Mammary epithelial cell (primary cell): ENCODE measurements at regions of chr3 and their contacts with region 1.

Region 1: DNA sequence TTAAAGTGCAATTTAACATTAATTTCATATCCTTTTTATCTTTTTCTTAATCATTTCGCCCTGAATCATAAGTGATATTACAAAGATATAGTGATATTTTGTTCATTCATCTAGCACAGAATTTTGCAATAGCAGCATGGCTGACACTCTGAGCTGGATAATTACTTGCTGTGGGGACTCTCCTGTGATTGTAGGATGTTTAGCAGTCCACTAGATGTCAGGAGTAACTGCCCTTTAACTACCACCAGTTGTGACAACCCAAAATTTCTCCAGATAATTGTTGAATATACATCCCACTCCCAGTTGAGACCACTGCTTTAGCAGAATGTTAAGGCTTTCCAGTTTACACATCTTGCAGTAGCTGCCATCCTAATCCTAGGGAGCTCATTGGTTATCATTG is 196.8 kb upstream of the MBNL1 start:
- DNase-seq: peak; percentile 45
- H3K4me3 ChIP-seq: no peak overlapping the region
- H3K27ac ChIP-seq: no peak overlapping the region
- H3K4me1 ChIP-seq: peaks cover 3% of the 10 kb centered on the region
- H3K27me3 ChIP-seq: no peaks in the 10 kb centered on the region
- CTCF ChIP-seq: peak; percentile 51 to 67

Region 2: GRCh38 chr3:152026033-152026556 is 45.8 kb before region 1 on chr3:
- CTCF ChIA-PET with region 1: no interaction called
- dilution Hi-C with region 1: no loop called
- in situ Hi-C with region 1: no loop called
- intact Hi-C with region 1: loop called (anchors 5 kb)
- DNase-seq: peak; percentile 66
- H3K4me3 ChIP-seq: peak overlapping the region in 1 of 3 experiments; percentile 33
- H3K27ac ChIP-seq: peak overlapping the region; percentile 67
- H3K4me1 ChIP-seq: peaks cover 36% of the 10 kb centered on the region
- H3K27me3 ChIP-seq: no peaks in the 10 kb centered on the region
- CTCF ChIP-seq: peak; percentile 13 to 20

Region 3: DNA sequence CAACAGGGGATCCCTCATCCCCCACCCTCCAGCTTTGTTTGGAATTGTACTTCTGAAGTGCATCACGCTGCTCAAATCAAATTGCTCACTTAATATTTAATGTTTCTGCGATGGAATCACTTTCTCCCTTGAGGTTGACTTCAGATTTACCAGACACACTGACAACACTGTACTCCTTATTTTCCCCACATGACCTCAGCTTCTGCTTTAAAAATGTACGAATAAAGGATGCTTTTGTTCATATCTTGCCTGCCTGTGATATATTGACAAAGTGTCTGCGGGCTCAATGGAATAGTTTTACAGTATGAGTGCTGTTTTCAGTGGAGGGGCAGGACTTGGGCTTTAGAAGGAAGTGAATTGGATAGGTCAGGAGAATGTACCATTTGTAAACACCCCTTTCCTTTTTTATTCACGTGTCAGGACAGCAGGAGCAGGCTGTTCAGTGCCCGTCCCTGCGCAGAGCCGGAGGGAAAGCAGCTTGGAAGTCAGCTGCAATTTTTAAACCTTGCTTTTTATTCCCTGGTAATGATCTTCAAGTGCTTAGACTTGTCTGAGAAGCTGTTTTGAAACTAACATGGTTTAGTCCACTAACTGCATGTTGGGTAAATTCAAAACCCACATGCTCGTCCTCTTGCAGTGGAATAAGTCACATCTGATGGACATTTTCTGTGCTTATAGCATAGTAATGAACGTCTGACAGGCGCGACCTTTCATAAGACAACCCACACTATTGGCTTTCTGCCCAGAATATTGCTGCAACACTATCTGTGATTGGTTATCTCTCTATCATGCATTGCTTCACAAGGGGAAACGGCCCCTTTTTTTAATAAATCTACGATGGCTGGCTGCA is 226.7 kb after region 1 on chr3:
- CTCF ChIA-PET with region 1: interaction called, 4 read pairs
- dilution Hi-C with region 1: no loop called
- in situ Hi-C with region 1: no loop called
- intact Hi-C with region 1: loop called (anchors 2 kb)
- DNase-seq: peak; percentile 89
- H3K4me3 ChIP-seq: peak overlapping the region; percentile 32 to 52 (median 47)
- H3K27ac ChIP-seq: peak overlapping the region; percentile 79
- H3K4me1 ChIP-seq: peaks cover 39% of the 10 kb centered on the region
- H3K27me3 ChIP-seq: no peaks in the 10 kb centered on the region
- CTCF ChIP-seq: no peak

Region 4: DNA sequence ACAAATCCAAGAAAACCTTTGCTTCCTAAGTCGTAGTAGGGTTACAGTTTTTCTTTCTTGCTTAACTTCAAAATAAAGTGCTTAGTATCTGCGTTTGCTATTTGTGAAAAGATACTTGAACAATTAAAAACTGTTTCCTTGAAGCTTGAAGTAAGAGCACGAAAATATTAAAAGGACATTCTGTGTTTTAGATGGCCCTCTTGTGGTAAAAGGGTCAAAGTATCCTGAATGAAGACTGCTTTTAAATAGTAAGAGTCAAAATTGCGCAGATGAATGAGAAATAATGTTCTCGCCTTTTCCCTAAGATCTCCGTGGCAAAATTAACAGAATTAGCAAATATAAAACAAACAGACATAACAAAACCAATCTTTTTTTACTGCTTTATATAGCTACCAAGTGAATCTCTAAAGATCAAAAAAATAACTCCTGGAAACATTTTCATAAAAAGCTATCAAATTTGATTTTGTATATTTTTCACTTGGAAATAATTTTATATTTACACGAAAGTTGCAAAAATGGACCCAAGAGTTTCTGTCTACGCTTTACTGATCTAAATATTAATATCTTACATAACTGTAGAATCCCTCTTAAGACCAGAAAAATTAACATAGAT is 372.2 kb after region 1 on chr3:
- CTCF ChIA-PET with region 1: interaction called, 24 read pairs
- dilution Hi-C with region 1: no loop called
- in situ Hi-C with region 1: loop called (anchors 5 to 10 kb)
- intact Hi-C with region 1: loop called (anchors 1 kb)
- DNase-seq: peak; percentile 42
- H3K4me3 ChIP-seq: no peak overlapping the region
- H3K27ac ChIP-seq: no peak overlapping the region
- H3K4me1 ChIP-seq: no peaks in the 10 kb centered on the region
- H3K27me3 ChIP-seq: no peaks in the 10 kb centered on the region
- CTCF ChIP-seq: peak; percentile 49 to 64

Region 5: GRCh38 chr3:152524198-152525140 is 452.5 kb after region 1 on chr3:
- CTCF ChIA-PET with region 1: no interaction called
- dilution Hi-C with region 1: no loop called
- in situ Hi-C with region 1: no loop called
- intact Hi-C with region 1: loop called (anchors 5 kb)
- DNase-seq: peak; percentile 12
- H3K4me3 ChIP-seq: no peak overlapping the region
- H3K27ac ChIP-seq: no peak overlapping the region
- H3K4me1 ChIP-seq: no peaks in the 10 kb centered on the region
- H3K27me3 ChIP-seq: no peaks in the 10 kb centered on the region
- CTCF ChIP-seq: peak; percentile 78 to 94